ENCODE measurements at regions of chr9 and their contacts with region 1.

Region 1: DNA sequence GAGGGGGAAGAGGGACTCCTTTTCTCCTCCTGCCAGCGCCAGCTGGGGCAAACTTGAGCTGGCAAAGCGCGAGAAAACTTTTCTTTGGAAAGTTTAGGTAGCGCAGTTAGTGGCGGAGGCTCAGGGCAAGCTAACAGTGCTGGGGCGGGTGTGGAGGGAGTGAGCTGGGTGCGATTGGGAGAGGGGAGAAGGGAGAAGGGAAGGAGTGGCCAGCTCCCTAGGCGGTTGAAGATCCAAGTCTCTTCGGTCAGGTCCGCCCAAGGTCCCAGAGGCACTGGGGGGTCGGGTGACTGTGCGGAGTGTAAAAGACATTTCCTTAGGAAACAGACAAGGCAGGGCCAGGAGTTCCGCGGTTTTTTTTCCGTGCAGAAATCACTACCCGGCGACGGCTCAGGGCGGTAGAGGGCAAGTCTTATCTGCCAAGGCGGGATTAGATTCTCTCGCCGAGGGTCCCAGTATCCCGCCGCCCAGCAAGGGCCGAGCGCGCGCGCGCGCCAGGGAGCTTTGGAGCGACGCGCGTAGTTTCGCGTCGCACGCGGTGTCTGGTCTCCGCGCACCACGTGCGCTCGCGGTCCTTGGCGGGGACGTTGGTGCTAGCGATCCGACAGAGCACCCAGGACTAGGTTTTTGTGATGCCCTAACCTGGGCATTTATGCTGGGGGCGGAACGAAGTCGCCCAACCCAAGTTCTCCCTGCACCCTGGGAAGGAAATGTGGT is 33.6 kb upstream of the NFIB start:
- DNase-seq: no peak
- ATAC-seq: no peak
- H3K4me3 Mint-ChIP-seq: no peak overlapping the region
- H3K27ac Mint-ChIP-seq: no peak overlapping the region
- H3K4me1 Mint-ChIP-seq: no peaks in the 10 kb centered on the region
- H3K27me3 Mint-ChIP-seq: peaks cover 45% of the 10 kb centered on the region
- CTCF ChIP-seq: no peak

Region 2: GRCh38 chr9:14288433-14288832 is 59.1 kb before region 1 on chr9:
- CTCF ChIA-PET with region 1: no interaction called
- POLR2A ChIA-PET with region 1: no interaction called
- intact Hi-C with region 1: no loop called
- DNase-seq: no peak
- ATAC-seq: no peak
- H3K4me3 Mint-ChIP-seq: no peak overlapping the region
- H3K27ac Mint-ChIP-seq: no peak overlapping the region
- H3K4me1 Mint-ChIP-seq: no peaks in the 10 kb centered on the region
- H3K27me3 Mint-ChIP-seq: peaks cover 5% of the 10 kb centered on the region
- CTCF ChIP-seq: no peak

Region 3: DNA sequence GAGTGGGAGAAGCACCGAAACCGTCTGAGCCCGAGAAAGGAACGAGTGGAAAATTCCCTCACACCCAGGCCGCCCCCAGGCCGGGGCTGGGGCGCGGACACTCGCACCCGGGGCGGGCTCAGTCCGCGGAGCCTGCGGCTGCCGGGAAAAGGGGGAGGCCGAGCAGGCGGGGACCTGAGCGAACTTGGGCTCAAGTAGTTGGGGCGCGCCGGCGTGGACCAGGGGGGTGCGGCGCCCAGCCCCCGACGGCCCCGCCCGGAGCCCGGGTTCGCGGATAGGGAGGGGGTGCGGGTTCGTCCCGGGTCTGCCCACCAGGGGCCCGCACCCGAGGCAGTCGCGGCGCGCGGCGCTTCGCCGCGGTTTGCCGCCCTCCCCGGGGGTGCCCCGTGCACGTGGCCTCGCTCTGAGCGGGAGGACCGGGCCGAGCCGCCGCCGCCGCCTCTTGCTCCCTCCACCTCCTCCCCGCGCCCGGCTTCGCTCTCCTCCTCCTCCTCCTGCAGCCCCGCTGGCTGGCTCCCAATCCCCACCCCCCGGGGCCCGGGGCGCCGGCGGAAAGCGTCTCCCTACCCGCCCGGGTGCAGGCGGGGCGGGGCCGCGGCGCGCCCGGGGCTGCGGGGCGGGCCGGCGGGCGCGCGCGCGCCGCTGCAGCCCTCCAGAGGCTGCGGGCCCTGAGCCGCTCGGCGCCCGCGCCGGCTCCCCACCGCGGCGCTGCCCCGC is 32.5 kb before region 1 on chr9:
- CTCF ChIA-PET with region 1: no interaction called
- POLR2A ChIA-PET with region 1: no interaction called
- intact Hi-C with region 1: loop called (anchors 5 kb)
- DNase-seq: no peak
- ATAC-seq: peak; percentile 57
- H3K4me3 Mint-ChIP-seq: peak overlapping the region; percentile 52
- H3K27ac Mint-ChIP-seq: no peak overlapping the region
- H3K4me1 Mint-ChIP-seq: peaks cover 20% of the 10 kb centered on the region
- H3K27me3 Mint-ChIP-seq: peaks cover 52% of the 10 kb centered on the region
- CTCF ChIP-seq: no peak